Activated CD4-positive, alpha-beta T cell treated with anti-CD3 and anti-CD28 coated beads, Interleukin-2, amount 10 ng/mL, durations not matched to agents 24 days and 14 days (primary cell): ENCODE measurements at regions of chr11 and their contacts with region 1.

Region 1: DNA sequence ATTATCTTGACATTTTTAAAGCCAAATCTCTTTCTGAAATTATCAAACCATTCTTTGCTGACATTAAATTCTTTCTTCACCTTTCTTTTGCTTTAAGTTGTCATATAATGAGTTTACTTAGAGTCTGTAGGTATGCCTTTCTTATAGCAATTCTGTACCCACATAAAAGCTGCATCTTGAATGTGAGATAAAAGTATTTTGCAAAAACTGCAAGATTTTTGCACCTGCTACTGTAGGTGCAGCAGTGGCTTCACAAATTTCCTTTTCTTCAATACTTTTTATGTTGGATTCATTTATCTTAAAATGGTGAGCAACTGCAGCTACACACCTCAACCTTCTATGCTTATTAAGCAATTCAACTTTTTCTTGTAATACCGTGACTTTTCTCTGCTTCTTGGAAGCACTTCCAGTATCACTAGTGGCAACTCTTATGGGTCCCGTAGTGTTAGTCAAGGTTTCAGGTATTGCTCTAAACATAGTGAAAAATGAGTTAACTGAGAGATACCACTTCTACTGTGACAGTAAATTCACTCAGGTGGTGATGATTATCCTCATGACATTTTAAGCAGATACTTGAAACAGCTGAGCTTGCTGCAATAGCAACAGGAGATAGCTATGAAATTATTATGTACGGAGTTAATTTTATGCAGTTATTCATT is 18.8 kb downstream of the ZFP91 start:
- DNase-seq: no peak
- H3K4me3 Mint-ChIP-seq: peak overlapping the region; percentile 22
- H3K27ac Mint-ChIP-seq: peak overlapping the region; percentile 59
- H3K4me1 Mint-ChIP-seq: peaks cover 51% of the 10 kb centered on the region
- H3K27me3 Mint-ChIP-seq: no peaks in the 10 kb centered on the region

Region 2: GRCh38 chr11:58609723-58610122 is 12.1 kb after region 1 on chr11:
- intact Hi-C with region 1: loop called (anchors 1 kb)
- DNase-seq: no peak
- H3K4me3 Mint-ChIP-seq: no peak overlapping the region
- H3K27ac Mint-ChIP-seq: no peak overlapping the region
- H3K4me1 Mint-ChIP-seq: peaks cover 37% of the 10 kb centered on the region
- H3K27me3 Mint-ChIP-seq: no peaks in the 10 kb centered on the region